Panc1 (cell line): ENCODE measurements at regions of chr1 and their contacts with region 1.

Region 1: DNA sequence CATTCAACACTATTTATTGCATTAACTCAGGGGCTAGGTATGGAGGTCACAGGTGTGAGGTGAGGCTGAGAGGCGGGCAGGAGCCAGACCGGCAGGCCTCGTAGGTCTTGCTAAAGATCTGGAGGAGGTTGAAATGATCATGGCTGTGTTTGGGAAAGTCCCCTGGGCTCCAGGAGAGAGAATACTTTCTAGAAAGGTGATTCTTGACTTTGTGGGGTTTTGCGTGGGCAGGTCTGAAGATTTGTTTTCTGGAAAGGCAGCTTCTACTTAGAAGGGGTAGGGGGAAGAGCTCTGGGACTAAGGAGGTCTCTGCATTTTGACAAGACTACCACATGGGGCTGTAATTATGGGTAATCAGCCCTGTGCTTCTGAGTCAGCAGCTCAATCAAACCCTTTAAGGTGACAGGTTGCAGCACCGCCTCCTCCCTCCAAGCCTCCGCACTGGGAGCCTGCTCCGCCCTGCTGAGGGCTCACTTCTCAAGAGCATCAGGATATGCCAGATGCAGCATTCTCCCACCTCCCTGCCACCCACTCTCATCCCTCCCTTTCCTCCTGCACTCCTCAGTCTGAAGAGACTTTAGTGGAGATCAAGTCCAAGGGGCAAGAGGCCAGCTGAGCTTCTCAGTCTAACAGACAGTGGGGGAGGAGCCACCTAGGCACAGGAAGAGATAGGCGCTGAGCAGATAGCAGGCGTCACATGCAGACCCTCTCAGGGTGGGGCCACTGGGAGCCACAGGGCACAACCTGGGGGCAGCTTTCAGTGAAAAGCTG is 30.5 kb downstream of the SLC30A1 start:
- DNase-seq: no peak
- ATAC-seq: no peak
- H3K4me3 ChIP-seq: no peak overlapping the region
- H3K27ac ChIP-seq: no peak overlapping the region
- H3K4me1 ChIP-seq: no peaks in the 10 kb centered on the region
- H3K27me3 ChIP-seq: no peaks in the 10 kb centered on the region
- CTCF ChIP-seq: no peak

Region 2: DNA sequence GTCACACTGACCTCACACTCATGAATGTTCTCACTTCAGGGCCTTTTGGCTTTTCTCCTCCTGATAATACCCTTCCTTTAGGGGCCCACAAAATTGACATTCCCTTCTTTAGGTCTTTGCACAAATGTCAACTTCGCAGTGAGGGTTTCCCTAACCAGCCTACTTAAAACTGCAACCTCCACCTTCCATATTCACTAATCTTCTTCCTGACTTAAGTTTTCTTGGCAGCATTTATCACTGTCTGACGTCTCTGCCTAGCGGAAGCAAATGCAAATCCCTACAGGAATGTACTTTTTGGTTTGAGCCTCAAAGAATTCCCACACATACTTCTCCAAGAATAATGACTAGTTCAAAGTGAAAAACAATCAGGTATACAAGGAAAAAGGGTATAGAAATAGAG is 454.0 kb after region 1 on chr1:
- CTCF ChIA-PET with region 1: no interaction called
- POLR2A ChIA-PET with region 1: interaction called, 15 read pairs
- in situ Hi-C with region 1: no loop called
- intact Hi-C with region 1: no loop called
- DNase-seq: no peak
- ATAC-seq: no peak
- H3K4me3 ChIP-seq: no peak overlapping the region
- H3K27ac ChIP-seq: no peak overlapping the region
- H3K4me1 ChIP-seq: peaks cover 3% of the 10 kb centered on the region; the same call in 1 of the 2 replicates
- H3K27me3 ChIP-seq: no peaks in the 10 kb centered on the region
- CTCF ChIP-seq: no peak